Endothelial cell of umbilical vein (primary cell): ENCODE measurements at regions of chr16 and their contacts with region 1.

Region 1: DNA sequence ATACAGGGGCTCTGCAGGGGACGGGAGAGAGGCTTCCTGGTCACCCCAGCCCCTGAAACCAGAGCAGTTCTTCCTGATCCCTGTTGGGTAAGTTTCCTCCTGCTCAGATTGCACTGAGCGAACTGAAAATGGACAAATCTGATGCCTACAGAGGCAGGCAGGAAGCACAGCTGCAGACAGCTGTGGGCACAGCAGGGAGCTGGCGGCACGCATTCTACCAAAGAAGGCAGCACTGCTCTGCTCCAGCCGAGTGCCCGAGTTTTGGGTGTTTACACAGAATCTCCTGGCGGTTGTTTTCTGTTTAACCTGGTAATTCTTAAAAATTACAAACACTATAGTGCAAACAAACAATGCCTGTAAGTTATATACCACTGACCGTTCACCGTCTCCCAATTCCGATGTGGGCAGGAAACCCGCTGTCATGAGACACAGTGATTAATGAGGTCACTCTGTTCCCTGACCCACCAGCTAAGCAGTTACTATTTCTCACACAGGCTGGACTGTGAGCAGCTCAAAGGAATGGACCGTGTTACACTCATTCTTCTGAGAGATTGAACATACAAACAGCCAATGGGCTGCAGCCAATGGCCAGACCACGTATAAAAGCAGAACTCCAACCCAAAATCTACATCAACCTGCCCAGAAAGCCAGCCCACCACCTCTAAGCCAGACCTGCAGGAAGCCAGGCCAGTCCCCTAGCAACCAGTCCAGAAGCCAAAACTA is 25.5 kb downstream of the NSMCE1 start:
- DNase-seq: peak; percentile 96
- H3K4me3 ChIP-seq: peak overlapping the region in 1 of 3 experiments; percentile 1
- H3K27ac ChIP-seq: peak overlapping the region; percentile 96
- H3K4me1 ChIP-seq: peaks cover 62% of the 10 kb centered on the region
- H3K27me3 ChIP-seq: no peaks in the 10 kb centered on the region
- CTCF ChIP-seq: peak in 1 of 2 donors; percentile 11
- POLR2A ChIP-seq: peak; percentile 52

Region 2: DNA sequence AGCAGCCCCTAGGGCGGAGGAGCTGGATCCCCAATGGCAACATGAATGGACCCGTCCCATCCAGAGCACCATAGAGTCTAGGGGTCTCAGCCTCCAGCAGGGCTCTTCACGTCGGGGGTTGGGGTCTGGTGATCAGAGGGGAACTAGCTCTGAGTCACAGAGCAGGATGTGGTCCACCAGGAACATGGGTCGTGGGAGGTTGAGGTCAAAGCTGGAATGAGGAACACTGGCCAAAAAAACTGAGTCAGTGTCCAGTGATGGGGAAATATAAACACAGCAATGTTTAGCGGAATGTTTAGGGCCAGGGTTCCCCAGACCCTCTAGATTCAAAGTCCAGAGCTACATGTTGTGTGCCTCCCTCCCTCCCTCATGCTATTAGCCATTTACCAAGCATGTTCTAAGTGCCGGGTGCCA is 255.4 kb before region 1 on chr16:
- CTCF ChIA-PET with region 1: no interaction called
- POLR2A ChIA-PET with region 1: no interaction called
- dilution Hi-C with region 1: no loop called
- intact Hi-C with region 1: no loop called
- DNase-seq: no peak
- H3K4me3 ChIP-seq: no peak overlapping the region
- H3K27ac ChIP-seq: no peak overlapping the region
- H3K4me1 ChIP-seq: no peaks in the 10 kb centered on the region
- H3K27me3 ChIP-seq: no peaks in the 10 kb centered on the region
- CTCF ChIP-seq: no peak
- POLR2A ChIP-seq: no peak

Region 3: DNA sequence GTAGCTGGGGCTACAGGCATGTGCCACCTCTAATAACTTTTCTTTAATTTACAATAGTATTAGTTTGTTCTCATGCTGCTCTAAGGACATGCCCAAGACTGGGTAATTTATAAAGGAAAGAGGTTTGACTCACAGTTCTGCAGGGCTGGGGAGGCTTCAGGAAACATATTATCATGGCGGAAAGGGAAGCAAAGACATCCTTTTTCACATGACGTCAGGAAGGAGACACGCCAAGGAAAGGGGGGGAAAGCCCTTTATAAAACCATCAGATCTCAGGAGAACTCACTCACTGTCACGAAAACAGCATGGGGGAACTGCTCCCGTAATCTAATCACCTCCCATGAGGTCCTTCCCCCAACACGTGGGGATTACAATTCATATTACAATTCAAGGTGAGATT is 89.1 kb after region 1 on chr16:
- CTCF ChIA-PET with region 1: interaction called, 4 read pairs
- POLR2A ChIA-PET with region 1: interaction called, 4 read pairs
- dilution Hi-C with region 1: no loop called
- intact Hi-C with region 1: loop called (anchors 1 kb)
- DNase-seq: peak; percentile 97
- H3K4me3 ChIP-seq: no peak overlapping the region
- H3K27ac ChIP-seq: peak overlapping the region; percentile 84
- H3K4me1 ChIP-seq: peaks cover 52% of the 10 kb centered on the region
- H3K27me3 ChIP-seq: no peaks in the 10 kb centered on the region
- CTCF ChIP-seq: no peak
- POLR2A ChIP-seq: peak; percentile 54